Left cardiac atrium (tissue), 4 donors: ENCODE measurements at regions of chr18 and their contacts with region 1.

Region 1: DNA sequence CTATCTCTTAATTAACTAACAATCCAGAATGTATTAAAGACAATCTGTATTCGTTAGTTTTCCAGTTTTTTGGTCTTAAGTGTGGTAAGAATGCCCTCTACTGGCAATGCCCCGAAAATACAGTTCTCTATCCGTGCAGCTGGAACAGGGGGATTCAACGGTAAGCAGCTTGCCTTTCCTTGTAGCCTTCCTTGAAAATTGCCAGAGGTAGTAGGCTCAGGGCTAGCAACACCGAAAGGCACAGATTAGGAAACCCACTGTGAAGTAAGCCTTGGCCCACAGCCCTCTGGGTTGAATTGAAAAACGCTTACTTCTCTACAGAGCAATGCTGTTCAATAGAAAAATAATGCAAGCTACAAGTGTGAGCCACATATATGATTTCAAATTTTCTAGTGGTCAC is 17.1 kb upstream of the VPS4B start:
- DNase-seq: no peak
- ATAC-seq: peak; percentile 65 to 74

Region 2: GRCh38 chr18:63339920-63340484 is 99.3 kb before region 1 on chr18:
- intact Hi-C with region 1: loop called (anchors 2 to 5 kb)
- DNase-seq: no peak
- ATAC-seq: no peak